H1 (cell line): ENCODE measurements at regions of chr17 and their contacts with region 1.

Region 1: GRCh38 chr17:75173526-75173925 is 9.2 kb downstream of the SUMO2 start:
- DNase-seq: no peak
- H3K4me3 ChIP-seq: no peak overlapping the region
- H3K27ac ChIP-seq: no peak overlapping the region; the same call in 1 of the 2 replicates
- H3K4me1 ChIP-seq: no peaks in the 10 kb centered on the region; a peak in 1 of 7 replicates
- H3K27me3 ChIP-seq: no peaks in the 10 kb centered on the region
- CTCF ChIP-seq: no peak
- EP300 ChIP-seq: no peak
- POLR2A ChIP-seq: no peak
- RAD21 ChIP-seq: no peak

Region 2: DNA sequence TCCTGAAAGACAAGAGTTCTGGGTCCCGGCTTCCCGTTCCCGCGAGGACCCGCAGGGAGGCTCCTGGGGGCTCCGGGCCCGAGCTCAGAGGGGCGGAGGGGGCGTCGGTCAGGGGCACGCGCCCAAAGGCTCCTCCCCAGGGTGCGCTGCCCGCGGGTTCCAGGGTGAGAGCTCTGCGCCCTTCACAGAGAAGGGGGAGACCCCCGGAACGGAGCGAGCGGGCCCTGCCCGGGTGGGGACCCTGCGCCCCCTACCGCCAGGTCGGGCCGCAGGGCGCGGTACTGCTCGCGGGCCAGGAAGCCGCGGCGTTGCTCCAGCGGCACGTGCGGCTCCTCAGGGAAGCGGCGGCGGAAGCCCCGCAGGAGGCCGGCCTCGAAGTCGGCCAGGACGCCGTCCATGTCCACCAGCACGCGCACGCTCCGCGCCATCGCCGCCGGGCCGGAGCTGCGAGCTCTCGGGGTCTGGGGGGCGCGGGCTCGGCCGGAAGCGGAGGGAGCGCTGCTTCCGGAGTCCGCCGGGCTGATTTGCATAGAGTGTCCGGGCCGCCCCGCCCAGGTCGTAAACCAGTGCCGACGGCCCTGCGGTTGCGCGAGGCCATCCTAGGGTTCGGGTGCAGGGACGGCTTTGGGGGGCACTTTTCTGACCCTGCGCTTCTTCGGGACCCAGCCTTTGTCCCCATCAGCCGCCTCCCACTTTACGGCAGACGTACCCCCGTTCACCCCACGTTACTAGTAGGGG is 42.1 kb before region 1 on chr17 and contains the start of gene NT5C:
- CTCF ChIA-PET with region 1: interaction called, 13 read pairs
- POLR2A ChIA-PET with region 1: interaction called, 6 read pairs
- DNase-seq: peak; percentile 58 to 91
- H3K4me3 ChIP-seq: peak within 1 kb of the TSS; percentile 69 to 95 (median 74)
- H3K27ac ChIP-seq: peak within 1 kb of the TSS; percentile 81
- H3K4me1 ChIP-seq: peaks cover 0 to 5% (median 4%) of the 10 kb centered on the region in 4 experiments; a peak in 5 of 7 replicates
- H3K27me3 ChIP-seq: no peaks in the 10 kb centered on the region
- CTCF ChIP-seq: peak; percentile 65 to 72 (median 68)
- EP300 ChIP-seq: no peak
- POLR2A ChIP-seq: peak; percentile 72 to 75; a peak in 2 of 3 replicates
- RAD21 ChIP-seq: peak; percentile 32 to 42; a peak in 2 of 4 replicates
- total RNA-seq, gene NT5C: 52.1 and 66.9 TPM in 2 replicates

Region 3: DNA sequence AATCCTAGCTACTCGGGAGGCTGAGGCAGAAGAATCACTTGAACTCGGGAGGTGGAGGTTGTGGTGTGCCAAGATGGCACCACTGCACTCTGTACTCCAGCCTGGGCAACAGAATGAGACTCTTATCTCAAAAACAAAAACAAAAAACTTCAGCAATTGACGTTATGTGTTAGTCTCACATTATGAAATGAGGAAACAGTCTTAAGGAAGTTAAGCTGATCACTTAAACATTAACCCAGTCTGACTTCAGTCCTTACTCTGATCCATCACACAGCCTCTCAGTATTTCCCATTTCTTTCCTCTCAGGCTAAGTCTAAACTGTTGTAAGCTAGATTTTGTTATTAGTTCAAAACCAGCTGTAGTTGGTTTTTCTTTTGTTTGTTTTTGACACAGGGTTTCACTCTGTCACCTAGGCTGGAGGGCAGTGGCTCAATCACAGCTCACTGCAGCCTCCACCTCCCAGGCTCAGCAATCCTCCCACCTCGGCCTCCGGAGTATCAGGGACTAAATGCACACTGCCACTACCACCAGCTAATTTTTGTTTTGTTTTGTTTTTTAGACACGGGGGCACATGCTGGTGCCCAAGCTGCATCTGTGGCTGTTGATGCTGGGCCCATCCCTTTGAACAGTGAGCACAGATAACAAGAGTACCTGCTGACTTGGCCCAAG is 25.5 kb before region 1 on chr17:
- CTCF ChIA-PET with region 1: interaction called, 13 read pairs
- POLR2A ChIA-PET with region 1: interaction called, 213 read pairs
- DNase-seq: no peak
- H3K4me3 ChIP-seq: no peak overlapping the region
- H3K27ac ChIP-seq: no peak overlapping the region
- H3K4me1 ChIP-seq: peaks cover 0 to 2% (median 1%) of the 10 kb centered on the region in 4 experiments; a peak in 2 of 7 replicates
- H3K27me3 ChIP-seq: no peaks in the 10 kb centered on the region
- CTCF ChIP-seq: no peak
- EP300 ChIP-seq: no peak
- POLR2A ChIP-seq: no peak
- RAD21 ChIP-seq: no peak

Region 4: GRCh38 chr17:75191584-75191983 is 18.1 kb after region 1 on chr17:
- CTCF ChIA-PET with region 1: interaction called, 21 read pairs
- POLR2A ChIA-PET with region 1: interaction called, 15 read pairs
- DNase-seq: no peak
- H3K4me3 ChIP-seq: no peak overlapping the region
- H3K27ac ChIP-seq: no peak overlapping the region
- H3K4me1 ChIP-seq: no peaks in the 10 kb centered on the region
- H3K27me3 ChIP-seq: no peaks in the 10 kb centered on the region
- CTCF ChIP-seq: no peak
- EP300 ChIP-seq: no peak
- POLR2A ChIP-seq: no peak
- RAD21 ChIP-seq: no peak